ENCODE measurements at regions of chr14 and their contacts with region 1.

Region 1: GRCh38 chr14:55354500-55354899 is 57.1 kb downstream of the ATG14 start:
- DNase-seq: peak; percentile 48
- ATAC-seq: peak; percentile 82
- H3K4me3 ChIP-seq: no peak overlapping the region
- H3K27ac ChIP-seq: no peak overlapping the region
- H3K4me1 ChIP-seq: peaks cover 5% of the 10 kb centered on the region
- H3K27me3 ChIP-seq: no peaks in the 10 kb centered on the region
- CTCF ChIP-seq: peak; percentile 69
- POLR2A ChIP-seq: no peak
- RAD21 ChIP-seq: peak; percentile 72

Region 2: GRCh38 chr14:55212634-55213033 is 141.9 kb before region 1 on chr14:
- CTCF ChIA-PET with region 1: interaction called, 4 read pairs
- POLR2A ChIA-PET with region 1: no interaction called
- dilution Hi-C with region 1: no loop called
- in situ Hi-C with region 1: no loop called
- intact Hi-C with region 1: loop called (anchors 5 kb)
- DNase-seq: no peak
- ATAC-seq: no peak
- H3K4me3 ChIP-seq: no peak overlapping the region
- H3K27ac ChIP-seq: no peak overlapping the region
- H3K4me1 ChIP-seq: no peaks in the 10 kb centered on the region
- H3K27me3 ChIP-seq: no peaks in the 10 kb centered on the region
- CTCF ChIP-seq: no peak
- POLR2A ChIP-seq: no peak
- RAD21 ChIP-seq: no peak

Region 3: DNA sequence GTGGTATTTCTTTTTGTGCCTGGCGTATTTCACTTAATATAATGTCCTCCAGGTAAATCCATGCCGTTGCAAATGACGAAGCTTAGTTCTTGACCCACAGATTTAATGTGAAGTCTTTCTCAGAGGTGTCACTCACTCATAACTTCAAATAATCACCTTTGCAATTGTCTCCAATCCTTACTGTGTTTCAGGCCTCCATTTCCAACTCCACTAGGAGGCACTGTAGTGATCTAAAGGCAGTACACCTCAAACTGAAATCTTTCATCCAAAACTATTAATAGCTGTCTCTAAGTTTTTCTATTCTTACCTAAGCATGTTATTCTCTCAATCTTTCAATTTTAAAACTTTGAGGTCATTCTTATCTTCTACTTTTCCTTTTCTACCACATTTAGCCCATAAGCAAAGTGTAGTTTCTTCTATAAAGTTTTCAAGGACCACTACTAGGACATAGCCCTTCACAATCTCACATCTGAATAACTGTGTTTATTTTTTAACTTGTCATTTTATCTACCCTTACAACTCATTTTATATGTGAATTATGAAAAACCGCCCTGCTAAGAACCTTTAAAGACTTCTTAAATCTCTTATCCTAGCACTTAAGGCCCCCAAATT is 108.7 kb before region 1 on chr14:
- CTCF ChIA-PET with region 1: interaction called, 3 read pairs
- POLR2A ChIA-PET with region 1: no interaction called
- dilution Hi-C with region 1: no loop called
- in situ Hi-C with region 1: no loop called
- intact Hi-C with region 1: loop called (anchors 1 kb)
- DNase-seq: peak; percentile 42
- ATAC-seq: 0 out of 2 replicates have a peak, but pooled peaks have one; percentile 35
- H3K4me3 ChIP-seq: no peak overlapping the region
- H3K27ac ChIP-seq: no peak overlapping the region
- H3K4me1 ChIP-seq: peaks cover 2% of the 10 kb centered on the region; the same call in 1 of the 2 replicates
- H3K27me3 ChIP-seq: peaks cover 24% of the 10 kb centered on the region
- CTCF ChIP-seq: peak; percentile 64
- POLR2A ChIP-seq: no peak
- RAD21 ChIP-seq: peak; percentile 59

Region 4: GRCh38 chr14:55270832-55271565 is 83.5 kb before region 1 on chr14 and contains the start of gene FBXO34:
- CTCF ChIA-PET with region 1: interaction called, 5 read pairs
- POLR2A ChIA-PET with region 1: no interaction called
- dilution Hi-C with region 1: no loop called
- in situ Hi-C with region 1: no loop called
- intact Hi-C with region 1: loop called (anchors 1 kb)
- DNase-seq: peak; percentile 94
- ATAC-seq: peak; percentile 93
- H3K4me3 ChIP-seq: peak within 1 kb of the TSS; percentile 100
- H3K27ac ChIP-seq: peak within 1 kb of the TSS; percentile 58
- H3K4me1 ChIP-seq: peaks cover 2% of the 10 kb centered on the region
- H3K27me3 ChIP-seq: no peaks in the 10 kb centered on the region
- CTCF ChIP-seq: peak; percentile 100; the same call in 1 of the 2 replicates
- POLR2A ChIP-seq: peak; percentile 80
- RAD21 ChIP-seq: peak; percentile 68
- total RNA-seq, gene FBXO34: 27.8 and 35.1 TPM in 2 replicates

Region 5: GRCh38 chr14:55846826-55847446 is 492.4 kb after region 1 on chr14:
- CTCF ChIA-PET with region 1: no interaction called
- POLR2A ChIA-PET with region 1: no interaction called
- dilution Hi-C with region 1: no loop called
- in situ Hi-C with region 1: no loop called
- intact Hi-C with region 1: no loop called
- DNase-seq: peak; percentile 50
- ATAC-seq: no peak
- H3K4me3 ChIP-seq: no peak overlapping the region
- H3K27ac ChIP-seq: no peak overlapping the region
- H3K4me1 ChIP-seq: peaks cover 18% of the 10 kb centered on the region
- H3K27me3 ChIP-seq: no peaks in the 10 kb centered on the region
- CTCF ChIP-seq: no peak
- POLR2A ChIP-seq: no peak
- RAD21 ChIP-seq: no peak

Measured in IMR-90 (cell line).